Heart left ventricle (tissue), 16 donors: ENCODE measurements at regions of chr2 and their contacts with region 1.

Region 1: DNA sequence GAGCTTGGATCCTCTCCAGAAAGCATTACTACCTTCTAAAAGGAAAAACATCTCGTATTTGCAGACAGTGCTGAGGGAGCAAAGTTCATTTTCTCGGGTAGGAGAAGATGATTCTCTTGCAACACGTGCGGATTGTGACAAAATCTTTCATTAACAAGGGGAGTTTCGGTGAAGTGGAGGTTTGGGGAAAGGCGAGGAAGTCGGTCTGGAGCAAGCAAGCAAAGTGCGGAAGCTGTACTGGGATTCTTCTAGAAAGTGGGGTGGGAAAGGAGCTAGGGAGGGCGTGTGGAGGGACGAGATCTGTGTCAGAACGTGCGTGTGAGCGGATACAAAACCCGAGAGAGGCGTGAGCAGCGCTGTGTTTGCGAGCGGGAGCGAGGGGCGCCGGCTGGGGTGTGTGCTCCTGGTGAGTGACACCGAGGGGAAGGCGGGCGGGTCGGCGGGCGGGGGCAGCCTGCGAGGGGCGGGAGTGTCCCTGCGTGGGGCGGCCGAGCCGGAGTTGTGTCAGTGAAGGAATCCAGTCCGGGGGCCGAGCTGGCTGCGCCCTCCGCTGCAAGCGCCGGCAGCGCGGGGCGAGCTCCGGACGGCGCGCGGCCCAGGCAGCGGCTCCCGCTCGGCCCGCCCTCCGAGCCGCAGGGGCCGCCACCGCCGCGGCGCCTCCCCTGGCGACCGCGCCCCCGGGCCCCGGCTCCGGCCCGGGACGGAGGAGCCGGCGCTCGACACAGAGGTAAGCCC is at the start of gene SPATS2L:
- DNase-seq: peak; percentile 87 to 94 (median 88)
- ATAC-seq: peak; percentile 77 to 90 (median 88)
- H3K4me3 ChIP-seq: peak within 1 kb of the TSS; percentile 64 to 98 (median 91)
- H3K27ac ChIP-seq: peak within 1 kb of the TSS; percentile 87 to 96 (median 92)
- H3K4me1 ChIP-seq: peaks cover 0 to 39% (median 21%) of the 10 kb centered on the region in 12 donors
- H3K27me3 ChIP-seq: no peaks in the 10 kb centered on the region
- CTCF ChIP-seq: no peak
- POLR2A ChIP-seq: peak in 1 of 2 donors; percentile 51
- total RNA-seq, gene SPATS2L: 69.7 to 177 (median 102) TPM

Region 2: GRCh38 chr2:199979832-199980628 is 326.3 kb before region 1 on chr2:
- intact Hi-C with region 1: loop called in 9 of 10 experiments (anchors 2 to 10 kb)
- DNase-seq: peak; percentile 76 to 88 (median 79)
- ATAC-seq: peak in 3 of 4 donors; percentile 75 to 82 (median 79)
- H3K4me3 ChIP-seq: peak overlapping the region in 5 of 12 donors; percentile 9 to 36 (median 23)
- H3K27ac ChIP-seq: no peak overlapping the region
- H3K4me1 ChIP-seq: peaks cover 0 to 9% (median 1%) of the 10 kb centered on the region in 12 donors
- H3K27me3 ChIP-seq: no peaks in the 10 kb centered on the region
- CTCF ChIP-seq: peak; percentile 84 to 96 (median 88)
- POLR2A ChIP-seq: no peak

Region 3: DNA sequence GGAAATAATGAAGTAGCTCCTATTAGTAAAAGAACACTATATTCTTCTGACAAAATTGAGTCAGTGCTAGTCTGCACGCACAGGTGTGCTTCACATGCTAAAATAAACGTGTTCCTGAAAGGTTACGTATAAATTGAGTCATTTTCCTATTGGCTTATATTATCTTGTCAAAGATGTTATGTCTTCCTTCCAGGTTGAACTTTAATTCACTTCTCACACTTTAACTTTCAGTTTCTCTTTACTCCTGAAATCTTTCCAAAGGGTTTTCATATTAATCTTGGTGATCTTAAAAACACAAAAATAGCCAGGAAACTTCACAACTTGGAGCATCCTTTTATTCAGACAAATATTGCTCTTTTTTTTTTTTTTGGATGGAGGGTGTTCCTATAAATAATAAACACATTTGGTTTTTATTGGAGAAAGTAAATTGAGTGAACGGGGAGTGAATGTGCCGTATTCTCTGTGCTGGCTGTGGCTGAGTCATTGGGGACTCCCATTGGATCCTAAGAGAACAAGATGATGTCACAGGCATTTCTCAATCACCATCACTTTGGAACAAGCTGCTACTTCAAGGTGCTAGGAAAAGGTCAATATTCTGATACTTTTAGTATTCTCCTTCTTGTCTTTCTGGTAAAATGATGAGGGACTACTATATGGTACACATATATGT is 150.1 kb before region 1 on chr2:
- intact Hi-C with region 1: loop called in 1 of 10 experiments (anchors 5 kb)
- DNase-seq: peak in 2 of 5 donors; percentile 37 to 42
- ATAC-seq: peak; percentile 61 to 86 (median 69)
- H3K4me3 ChIP-seq: peak overlapping the region in 9 of 12 donors; percentile 21 to 55 (median 33)
- H3K27ac ChIP-seq: peak overlapping the region in 2 of 12 donors; percentile 21 to 26
- H3K4me1 ChIP-seq: peaks cover 0 to 8% (median 0%) of the 10 kb centered on the region in 12 donors
- H3K27me3 ChIP-seq: no peaks in the 10 kb centered on the region
- CTCF ChIP-seq: no peak
- POLR2A ChIP-seq: no peak

Region 4: GRCh38 chr2:200405599-200406298 is 99.4 kb after region 1 on chr2:
- intact Hi-C with region 1: loop called in 1 of 10 experiments (anchors 5 kb)
- DNase-seq: no peak
- ATAC-seq: peak in 3 of 4 donors; percentile 69 to 89 (median 83)
- H3K4me3 ChIP-seq: no peak overlapping the region
- H3K27ac ChIP-seq: peak overlapping the region in 9 of 12 donors; percentile 1 to 76 (median 22)
- H3K4me1 ChIP-seq: peaks cover 0 to 60% (median 27%) of the 10 kb centered on the region in 12 donors
- H3K27me3 ChIP-seq: no peaks in the 10 kb centered on the region
- CTCF ChIP-seq: no peak
- POLR2A ChIP-seq: no peak

Region 5: GRCh38 chr2:200454927-200455801 is 148.8 kb after region 1 on chr2:
- intact Hi-C with region 1: loop called in 1 of 10 experiments (anchors 10 kb)
- DNase-seq: no peak
- ATAC-seq: peak in 3 of 4 donors; percentile 50 to 65 (median 56)
- H3K4me3 ChIP-seq: no peak overlapping the region
- H3K27ac ChIP-seq: no peak overlapping the region
- H3K4me1 ChIP-seq: peaks cover 0 to 30% (median 18%) of the 10 kb centered on the region in 12 donors
- H3K27me3 ChIP-seq: no peaks in the 10 kb centered on the region
- CTCF ChIP-seq: no peak
- POLR2A ChIP-seq: no peak

Region 6: DNA sequence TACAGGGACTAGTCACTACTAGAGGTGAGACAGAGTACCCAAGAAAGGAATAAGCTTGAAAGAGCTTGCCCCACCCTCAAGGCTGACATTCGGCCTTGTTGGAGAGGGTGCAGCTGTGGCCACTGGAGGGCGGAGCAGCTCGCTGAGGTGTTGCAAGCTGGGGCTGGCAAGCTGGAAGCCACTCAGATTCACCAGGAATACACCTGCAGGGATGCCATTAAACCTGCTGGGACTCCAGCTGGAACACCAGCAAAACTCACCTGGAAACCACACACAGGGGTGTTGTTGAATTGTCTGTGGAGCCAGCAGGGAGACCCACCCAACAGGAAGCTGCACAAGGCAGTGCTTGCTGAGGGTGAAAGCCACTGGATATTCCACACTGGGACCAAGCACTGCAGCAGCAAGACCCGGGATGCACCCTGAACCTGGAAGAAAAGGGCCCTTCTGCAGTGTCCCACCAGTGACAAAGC is 177.4 kb after region 1 on chr2:
- intact Hi-C with region 1: loop called in 6 of 10 experiments (anchors 10 kb)
- DNase-seq: no peak
- ATAC-seq: peak in 3 of 4 donors; percentile 27 to 28 (median 28)
- H3K4me3 ChIP-seq: no peak overlapping the region
- H3K27ac ChIP-seq: no peak overlapping the region
- H3K4me1 ChIP-seq: peaks cover 0 to 5% (median 0%) of the 10 kb centered on the region in 12 donors
- H3K27me3 ChIP-seq: no peaks in the 10 kb centered on the region
- CTCF ChIP-seq: peak in 6 of 12 donors; percentile 7 to 38 (median 18)
- POLR2A ChIP-seq: no peak